Ovary (tissue), 10 donors: ENCODE measurements at regions of chr19 and their contacts with region 1.

Region 1: DNA sequence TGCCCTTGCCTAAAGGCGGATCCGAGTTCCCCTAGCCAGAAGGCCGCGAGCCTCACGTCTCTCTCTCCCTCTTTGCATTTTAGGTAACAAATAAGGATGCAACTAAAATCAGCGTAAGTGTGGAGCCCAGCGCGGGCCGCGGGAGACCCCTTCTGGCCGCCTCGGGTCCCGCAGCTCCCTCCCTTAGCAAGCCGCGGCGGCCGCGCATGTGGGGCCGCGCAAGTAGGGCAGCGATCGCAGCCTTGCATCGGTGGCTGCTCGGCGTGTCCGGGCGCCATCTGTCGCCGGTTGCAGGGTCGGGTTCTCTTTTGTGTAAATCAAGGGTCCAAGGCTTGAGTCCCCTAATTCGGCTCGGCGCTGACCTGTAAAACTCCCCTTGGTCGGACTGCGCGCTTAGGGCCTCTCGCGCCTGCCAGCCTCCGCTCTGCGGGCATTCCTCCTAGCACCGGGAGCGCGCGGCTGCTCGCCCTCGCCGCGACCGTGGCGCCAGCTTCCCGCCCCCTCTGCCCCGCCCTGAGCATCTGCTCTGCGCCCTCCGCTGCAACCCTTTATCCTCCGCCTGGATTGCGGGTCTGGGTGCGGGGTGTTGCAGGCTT is 2.7 kb downstream of the VSTM2B start:
- DNase-seq: peak; percentile 15 to 65 (median 43)
- H3K4me3 ChIP-seq: no peak overlapping the region
- H3K27ac ChIP-seq: no peak overlapping the region
- H3K4me1 ChIP-seq: peaks cover 6% of the 10 kb centered on the region
- H3K27me3 ChIP-seq: no peaks in the 10 kb centered on the region
- CTCF ChIP-seq: peak; percentile 37 to 49 (median 46)
- EP300 ChIP-seq: no peak
- POLR2A ChIP-seq: no peak

Region 2: GRCh38 chr19:29285878-29286277 is 242.6 kb before region 1 on chr19:
- intact Hi-C with region 1: loop called in 1 of 4 experiments (anchors 5 kb)
- DNase-seq: no peak
- H3K4me3 ChIP-seq: no peak overlapping the region
- H3K27ac ChIP-seq: no peak overlapping the region
- H3K4me1 ChIP-seq: no peaks in the 10 kb centered on the region
- H3K27me3 ChIP-seq: no peaks in the 10 kb centered on the region
- CTCF ChIP-seq: no peak
- EP300 ChIP-seq: no peak
- POLR2A ChIP-seq: no peak